Activated CD8-positive, alpha-beta T cell treated with anti-CD3 and anti-CD28 coated beads for 36 hours (primary cell): ENCODE measurements at regions of chr6 and their contacts with region 1.

Region 1: DNA sequence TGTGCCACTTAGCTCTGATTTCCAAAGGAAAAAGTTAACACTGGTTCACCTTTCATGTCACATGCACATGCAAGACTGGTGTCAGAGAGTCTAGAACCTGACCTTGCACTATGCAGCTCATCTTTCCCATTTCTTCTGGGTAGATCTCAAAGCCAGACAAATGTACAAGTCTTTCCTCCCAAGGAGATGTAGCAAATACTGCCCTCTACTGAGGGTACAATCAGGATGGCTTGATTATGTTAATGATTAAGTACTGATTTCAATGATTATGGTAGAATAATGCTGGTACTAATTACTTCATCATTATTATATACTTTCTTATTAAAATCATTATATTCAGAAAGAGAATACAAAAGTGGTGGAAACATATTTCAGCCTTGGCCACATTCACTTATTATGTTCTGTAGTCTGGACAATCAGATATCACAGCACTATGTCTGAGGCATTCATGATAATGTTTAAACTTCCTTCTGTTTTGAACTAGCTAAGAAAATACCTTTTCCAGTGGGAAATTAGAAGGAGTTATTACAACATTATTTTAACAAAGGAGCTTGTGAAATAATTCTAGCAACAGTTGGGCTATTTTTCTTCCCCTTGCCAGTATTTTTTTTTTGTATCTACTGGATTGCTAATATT is 68.5 kb upstream of the FOXO3 start:
- DNase-seq: no peak
- ATAC-seq: peak; percentile 30
- H3K4me3 Mint-ChIP-seq: no peak overlapping the region
- H3K27ac Mint-ChIP-seq: no peak overlapping the region
- H3K4me1 Mint-ChIP-seq: peaks cover 3% of the 10 kb centered on the region
- H3K27me3 Mint-ChIP-seq: no peaks in the 10 kb centered on the region
- CTCF ChIP-seq: peak; percentile 65

Region 2: DNA sequence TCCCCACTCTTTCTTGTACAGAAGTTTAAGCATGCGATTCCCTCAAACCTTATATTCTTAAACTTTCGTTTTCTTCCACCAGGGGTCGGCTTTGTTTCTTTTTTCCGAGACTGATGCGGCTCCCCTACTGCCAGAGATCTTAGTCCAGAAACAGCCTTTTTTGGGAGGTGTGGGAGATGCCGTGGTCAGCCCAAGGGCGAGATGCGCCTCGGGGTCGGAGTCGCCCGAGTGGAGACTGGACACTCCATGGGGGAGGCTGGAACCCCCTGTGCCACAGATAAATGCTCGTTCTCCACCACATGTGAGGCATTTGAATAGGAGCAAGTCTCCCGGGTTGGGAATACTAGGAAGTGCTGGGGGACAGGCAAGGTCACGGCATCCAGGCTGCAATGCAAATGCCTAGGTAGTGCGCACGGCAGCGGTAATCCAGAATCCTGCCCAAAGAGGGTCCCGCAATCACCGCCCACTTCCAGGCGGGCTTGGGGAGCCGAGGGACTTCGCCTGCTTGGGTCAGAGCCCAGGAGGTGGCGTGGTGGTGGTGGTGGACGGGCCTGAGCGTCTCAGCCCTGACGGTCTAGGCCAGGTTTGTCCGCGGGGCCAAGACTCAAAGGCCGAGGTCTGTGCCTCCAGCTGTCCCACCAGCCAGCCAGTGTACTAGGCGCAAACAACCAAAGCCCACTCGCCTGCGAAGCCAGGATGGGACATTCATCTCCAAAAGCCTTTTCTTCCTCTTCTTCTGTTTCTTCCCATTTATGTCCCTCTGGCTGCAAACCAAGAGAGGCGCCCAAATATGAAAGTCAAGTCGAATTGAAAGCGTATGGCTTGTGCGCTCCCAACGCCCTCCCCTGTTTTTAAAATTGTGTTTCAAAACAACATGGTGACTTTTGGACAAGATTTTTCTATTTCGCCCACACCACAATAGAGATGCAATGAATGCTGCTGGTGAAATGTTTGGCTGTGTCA is 378.4 kb before region 1 on chr6:
- CTCF ChIA-PET with region 1: interaction called, 44 read pairs
- POLR2A ChIA-PET with region 1: no interaction called
- intact Hi-C with region 1: loop called (anchors 2 kb)
- DNase-seq: peak; percentile 29
- ATAC-seq: no peak
- H3K4me3 Mint-ChIP-seq: peak overlapping the region; percentile 39
- H3K27ac Mint-ChIP-seq: no peak overlapping the region
- H3K4me1 Mint-ChIP-seq: peaks cover 39% of the 10 kb centered on the region
- H3K27me3 Mint-ChIP-seq: peaks cover 73% of the 10 kb centered on the region
- CTCF ChIP-seq: peak; percentile 78

Region 3: GRCh38 chr6:108168501-108169463 is 323.5 kb before region 1 on chr6:
- CTCF ChIA-PET with region 1: interaction called, 8 read pairs
- POLR2A ChIA-PET with region 1: no interaction called
- intact Hi-C with region 1: loop called (anchors 10 kb)
- DNase-seq: peak; percentile 35
- ATAC-seq: peak; percentile 41
- H3K4me3 Mint-ChIP-seq: peak overlapping the region; percentile 36
- H3K27ac Mint-ChIP-seq: no peak overlapping the region
- H3K4me1 Mint-ChIP-seq: peaks cover 46% of the 10 kb centered on the region
- H3K27me3 Mint-ChIP-seq: peaks cover 83% of the 10 kb centered on the region
- CTCF ChIP-seq: no peak

Region 4: GRCh38 chr6:108260809-108261569 is 231.3 kb before region 1 on chr6 and contains the start of gene SNX3:
- CTCF ChIA-PET with region 1: interaction called, 11 read pairs
- POLR2A ChIA-PET with region 1: no interaction called
- intact Hi-C with region 1: loop called (anchors 10 kb)
- DNase-seq: peak; percentile 92
- ATAC-seq: peak; percentile 92
- H3K4me3 Mint-ChIP-seq: peak within 1 kb of the TSS; percentile 85
- H3K27ac Mint-ChIP-seq: peak within 1 kb of the TSS; percentile 93
- H3K4me1 Mint-ChIP-seq: peaks cover 22% of the 10 kb centered on the region
- H3K27me3 Mint-ChIP-seq: no peaks in the 10 kb centered on the region
- CTCF ChIP-seq: no peak
- total RNA-seq, gene SNX3: 62.5 to 68.4 TPM

Region 5: DNA sequence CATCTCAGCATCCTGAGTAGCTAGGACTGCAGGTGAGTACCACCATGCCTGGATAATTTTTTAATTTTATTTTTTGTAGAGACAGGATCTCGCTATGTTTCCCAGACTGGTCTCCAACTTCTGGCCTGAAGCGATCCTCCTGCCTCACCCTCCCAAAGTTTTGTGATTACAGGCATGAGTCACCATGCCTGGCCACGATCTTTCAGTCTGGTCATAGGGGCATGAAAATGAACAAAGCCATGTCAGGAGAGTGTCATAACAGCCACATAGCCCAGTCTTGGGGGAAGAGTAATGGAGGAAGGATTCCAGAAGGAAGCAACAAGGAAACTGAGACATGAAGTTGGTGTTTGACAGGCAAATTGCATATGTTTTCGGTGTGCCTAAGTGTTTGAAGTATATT is 214.4 kb before region 1 on chr6:
- CTCF ChIA-PET with region 1: no interaction called
- POLR2A ChIA-PET with region 1: no interaction called
- intact Hi-C with region 1: no loop called
- DNase-seq: no peak
- ATAC-seq: no peak
- H3K4me3 Mint-ChIP-seq: no peak overlapping the region
- H3K27ac Mint-ChIP-seq: no peak overlapping the region
- H3K4me1 Mint-ChIP-seq: no peaks in the 10 kb centered on the region
- H3K27me3 Mint-ChIP-seq: no peaks in the 10 kb centered on the region
- CTCF ChIP-seq: no peak

Region 6: GRCh38 chr6:108295636-108296035 is 196.6 kb before region 1 on chr6:
- CTCF ChIA-PET with region 1: no interaction called
- POLR2A ChIA-PET with region 1: no interaction called
- intact Hi-C with region 1: no loop called
- DNase-seq: no peak
- ATAC-seq: no peak
- H3K4me3 Mint-ChIP-seq: peak overlapping the region; percentile 90
- H3K27ac Mint-ChIP-seq: peak overlapping the region; percentile 100
- H3K4me1 Mint-ChIP-seq: peaks cover 15% of the 10 kb centered on the region
- H3K27me3 Mint-ChIP-seq: no peaks in the 10 kb centered on the region
- CTCF ChIP-seq: no peak

Region 7: DNA sequence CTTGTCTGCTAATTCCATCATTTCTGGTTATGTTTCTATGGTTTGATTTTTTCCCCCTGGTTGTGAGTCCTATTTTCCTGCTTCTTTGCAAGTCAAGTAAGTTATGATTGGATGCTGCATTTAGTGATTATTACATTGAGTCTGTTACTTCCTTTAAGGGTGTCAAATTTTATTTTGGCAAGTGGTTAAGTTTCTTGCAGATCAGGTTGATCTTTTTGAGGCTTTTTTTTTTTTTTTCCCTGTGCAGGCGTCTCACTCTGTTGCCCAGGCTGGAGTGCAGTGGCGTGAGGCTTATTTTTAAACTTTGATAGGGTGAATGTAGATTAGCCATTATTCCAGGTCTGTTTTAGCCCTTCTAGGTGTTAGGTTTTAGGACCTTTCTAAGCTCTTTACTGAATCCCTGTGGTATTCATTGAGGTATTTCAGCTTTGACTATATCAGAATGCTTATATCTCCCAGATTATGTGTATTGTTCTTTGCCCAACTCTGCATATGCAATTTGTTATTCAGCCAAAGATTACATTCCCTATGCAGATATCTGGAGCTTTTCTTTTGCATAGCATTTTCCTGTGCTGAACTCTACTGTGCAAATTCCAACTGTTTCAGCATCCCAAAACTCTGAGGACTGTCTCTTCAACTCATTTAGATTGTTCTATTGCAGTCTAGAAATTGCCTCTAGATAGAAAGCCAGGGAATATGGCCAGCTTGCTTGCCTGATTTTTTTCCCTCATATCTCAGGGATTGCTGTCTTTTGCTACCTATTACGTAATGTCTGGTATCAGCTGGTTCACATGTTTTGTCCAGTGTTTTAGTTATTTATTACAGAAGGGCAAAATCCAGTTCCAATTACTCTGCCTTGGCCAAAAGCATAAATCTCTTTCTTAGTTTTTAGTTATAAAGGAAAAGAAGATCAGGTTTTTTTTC is 84.1 kb before region 1 on chr6:
- CTCF ChIA-PET with region 1: no interaction called
- POLR2A ChIA-PET with region 1: no interaction called
- intact Hi-C with region 1: no loop called
- DNase-seq: no peak
- ATAC-seq: no peak
- H3K4me3 Mint-ChIP-seq: no peak overlapping the region
- H3K27ac Mint-ChIP-seq: no peak overlapping the region
- H3K4me1 Mint-ChIP-seq: no peaks in the 10 kb centered on the region
- H3K27me3 Mint-ChIP-seq: no peaks in the 10 kb centered on the region
- CTCF ChIP-seq: no peak

Region 8: GRCh38 chr6:108476847-108477430 is 15.3 kb before region 1 on chr6:
- CTCF ChIA-PET with region 1: interaction called, 25 read pairs
- POLR2A ChIA-PET with region 1: no interaction called
- intact Hi-C with region 1: no loop called
- DNase-seq: no peak
- ATAC-seq: no peak
- H3K4me3 Mint-ChIP-seq: no peak overlapping the region
- H3K27ac Mint-ChIP-seq: no peak overlapping the region
- H3K4me1 Mint-ChIP-seq: peaks cover 6% of the 10 kb centered on the region
- H3K27me3 Mint-ChIP-seq: no peaks in the 10 kb centered on the region
- CTCF ChIP-seq: no peak

Region 9: GRCh38 chr6:108589287-108589791 is 97.1 kb after region 1 on chr6:
- CTCF ChIA-PET with region 1: no interaction called
- POLR2A ChIA-PET with region 1: no interaction called
- intact Hi-C with region 1: no loop called
- DNase-seq: no peak
- ATAC-seq: no peak
- H3K4me3 Mint-ChIP-seq: no peak overlapping the region
- H3K27ac Mint-ChIP-seq: no peak overlapping the region
- H3K4me1 Mint-ChIP-seq: peaks cover 55% of the 10 kb centered on the region
- H3K27me3 Mint-ChIP-seq: no peaks in the 10 kb centered on the region
- CTCF ChIP-seq: no peak